Posterior vena cava (tissue), 2 donors: ENCODE measurements at regions of chr6 and their contacts with region 1.

Region 1: DNA sequence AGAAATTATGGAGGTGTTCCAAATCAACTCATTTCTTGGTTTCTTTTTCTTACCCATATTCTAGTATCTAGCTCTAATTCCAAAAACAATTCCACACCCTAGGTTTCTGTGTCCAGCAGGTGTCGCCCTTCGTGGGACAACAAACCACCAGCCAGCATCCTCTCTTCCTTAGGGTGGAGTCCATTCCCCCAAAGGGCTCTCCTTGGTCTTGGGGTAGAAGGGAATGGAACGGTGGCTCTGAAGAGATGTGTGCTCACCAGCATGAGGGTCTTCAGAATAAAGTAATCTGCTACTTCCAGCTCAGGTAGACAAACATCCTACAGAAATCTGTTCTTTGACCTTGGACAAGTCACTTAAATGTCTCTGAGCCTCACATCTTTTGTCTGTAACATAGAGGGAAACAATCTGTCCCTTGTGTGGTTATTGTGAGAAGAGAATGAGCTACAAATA is 7.2 kb downstream of the HLA-DMB start:
- DNase-seq: peak; percentile 89

Region 2: DNA sequence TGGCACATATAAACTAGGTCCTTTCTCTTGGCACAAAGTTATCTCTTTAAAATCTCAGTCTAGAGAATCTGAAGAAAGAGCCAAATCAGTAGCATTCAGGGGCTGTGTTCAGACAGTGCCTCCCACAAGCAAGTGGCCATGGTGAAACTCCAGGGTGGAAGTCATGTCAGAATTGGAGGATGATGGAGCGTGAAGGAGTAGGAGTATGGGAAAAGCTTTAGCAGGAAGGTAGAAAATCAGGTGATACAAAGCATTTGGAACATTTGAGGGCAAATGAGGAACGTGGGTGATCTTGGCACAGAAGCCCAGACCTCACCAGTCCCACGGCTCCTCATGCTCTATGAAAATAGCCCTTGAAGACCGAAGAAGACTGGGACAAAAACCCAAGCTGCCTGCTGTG is 264.4 kb before region 1 on chr6:
- intact Hi-C with region 1: no loop called
- DNase-seq: no peak

Region 3: GRCh38 chr6:32885698-32886286 is 47.9 kb before region 1 on chr6:
- intact Hi-C with region 1: loop called in 1 of 2 experiments (anchors 10 kb)
- DNase-seq: no peak

Region 4: GRCh38 chr6:32984605-32985389 is 51.1 kb after region 1 on chr6:
- intact Hi-C with region 1: loop called (anchors 5 kb)
- DNase-seq: peak; percentile 96

Region 5: DNA sequence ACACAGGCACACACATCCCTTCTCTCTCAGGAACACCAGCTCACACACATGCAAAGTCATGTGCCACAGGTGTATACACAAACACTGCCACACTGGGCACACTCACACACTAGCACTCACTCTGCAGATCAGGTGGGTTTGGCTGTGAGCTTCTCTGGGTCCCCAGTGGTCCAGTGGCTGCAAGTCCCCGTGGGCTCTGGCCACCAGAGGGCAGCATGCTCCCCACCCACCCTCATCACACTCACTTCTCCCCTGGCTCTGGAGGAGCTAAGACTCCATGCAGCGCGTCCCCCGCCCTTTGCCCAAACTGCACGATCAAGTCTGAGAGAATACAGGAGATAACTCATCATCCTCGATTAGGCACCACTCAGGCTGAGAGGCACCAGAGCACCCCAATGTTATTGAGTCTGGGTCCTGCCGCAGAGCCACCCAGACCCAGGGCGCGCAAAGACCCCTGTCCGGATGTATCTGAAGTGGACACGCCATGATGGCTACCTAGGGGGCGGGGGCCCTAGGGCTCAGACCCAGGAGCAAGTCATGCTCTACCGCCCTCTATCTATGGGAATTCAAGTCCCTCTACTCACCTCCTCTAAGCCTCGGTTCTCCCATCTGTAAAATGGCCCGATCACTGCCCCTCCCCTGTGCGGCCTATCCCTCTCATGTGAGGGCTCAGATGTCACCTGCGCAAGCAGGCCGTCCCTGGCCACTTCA is 1121.7 kb after region 1 on chr6:
- intact Hi-C with region 1: no loop called
- DNase-seq: no peak

Region 6: DNA sequence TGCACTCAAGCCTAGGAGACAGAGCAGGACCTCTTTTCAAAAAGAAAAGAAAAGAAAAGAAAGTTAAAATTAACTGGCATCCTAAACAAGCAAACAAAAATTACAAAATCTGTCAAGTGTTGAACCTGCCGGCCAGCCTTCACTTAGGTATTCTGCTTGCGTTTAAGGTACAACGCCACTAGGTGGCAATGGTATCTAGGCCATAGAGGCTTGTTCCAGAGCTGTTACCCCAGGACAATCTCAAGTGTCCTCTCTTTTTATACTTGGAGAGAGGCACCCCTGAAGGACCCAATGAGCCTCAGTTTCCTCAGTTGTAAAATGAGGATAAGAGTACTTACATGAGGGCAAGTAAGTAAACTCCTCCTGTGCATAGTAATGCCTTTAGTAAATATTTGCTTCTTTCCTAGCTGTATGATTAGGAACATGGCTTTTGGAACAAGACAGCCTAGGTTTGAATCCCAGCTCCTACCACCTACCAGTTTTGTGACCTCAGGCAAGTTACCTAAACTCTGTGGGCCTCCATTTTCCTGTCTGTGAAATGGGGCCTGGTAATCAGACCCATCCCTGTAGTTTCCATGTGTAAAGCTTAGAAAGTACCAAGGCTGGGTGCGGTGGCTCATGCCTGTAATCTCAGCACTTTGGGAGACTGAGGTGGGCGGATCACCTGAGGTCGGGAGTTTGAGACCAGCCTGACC is 1526.4 kb after region 1 on chr6:
- intact Hi-C with region 1: no loop called
- DNase-seq: no peak